ENCODE measurements at regions of chr14 and their contacts with region 1.

Region 1: DNA sequence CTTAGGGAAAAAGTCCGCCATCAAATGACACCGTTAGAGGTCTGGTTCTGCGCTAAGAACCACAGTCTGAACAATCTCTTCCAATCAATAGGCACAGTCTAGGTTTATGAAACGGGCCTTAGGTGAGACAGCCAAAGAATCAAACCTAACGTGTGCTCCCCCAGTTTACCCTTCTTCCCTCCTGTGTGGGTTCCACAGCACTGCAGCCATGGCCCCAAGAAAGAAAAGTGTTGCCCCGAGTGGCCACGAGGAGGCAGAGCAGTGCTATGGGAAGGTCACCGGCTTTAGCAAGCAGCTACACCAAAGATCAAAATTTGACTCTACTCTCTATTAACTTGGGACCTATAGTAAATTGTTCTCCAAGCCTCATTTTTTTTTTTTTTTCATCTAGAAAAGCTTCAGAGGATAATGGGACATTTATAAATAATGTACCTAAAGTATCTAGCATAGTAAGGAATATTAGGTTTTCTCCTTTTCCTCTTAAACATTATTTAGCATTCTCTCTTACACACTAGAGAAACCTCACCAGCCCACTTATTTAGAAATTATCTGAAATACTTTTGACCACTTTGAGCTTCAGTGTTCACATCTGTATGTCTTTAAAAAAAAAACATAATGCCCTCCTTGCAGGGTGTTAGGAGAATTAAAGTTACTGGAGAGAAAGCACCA is 70.2 kb upstream of the GPHB5 start:
- DNase-seq: peak; percentile 53
- H3K4me3 ChIP-seq: no peak overlapping the region
- H3K27ac ChIP-seq: no peak overlapping the region
- H3K4me1 ChIP-seq: no peaks in the 10 kb centered on the region
- H3K27me3 ChIP-seq: no peaks in the 10 kb centered on the region
- CTCF ChIP-seq: peak; percentile 89

Region 2: DNA sequence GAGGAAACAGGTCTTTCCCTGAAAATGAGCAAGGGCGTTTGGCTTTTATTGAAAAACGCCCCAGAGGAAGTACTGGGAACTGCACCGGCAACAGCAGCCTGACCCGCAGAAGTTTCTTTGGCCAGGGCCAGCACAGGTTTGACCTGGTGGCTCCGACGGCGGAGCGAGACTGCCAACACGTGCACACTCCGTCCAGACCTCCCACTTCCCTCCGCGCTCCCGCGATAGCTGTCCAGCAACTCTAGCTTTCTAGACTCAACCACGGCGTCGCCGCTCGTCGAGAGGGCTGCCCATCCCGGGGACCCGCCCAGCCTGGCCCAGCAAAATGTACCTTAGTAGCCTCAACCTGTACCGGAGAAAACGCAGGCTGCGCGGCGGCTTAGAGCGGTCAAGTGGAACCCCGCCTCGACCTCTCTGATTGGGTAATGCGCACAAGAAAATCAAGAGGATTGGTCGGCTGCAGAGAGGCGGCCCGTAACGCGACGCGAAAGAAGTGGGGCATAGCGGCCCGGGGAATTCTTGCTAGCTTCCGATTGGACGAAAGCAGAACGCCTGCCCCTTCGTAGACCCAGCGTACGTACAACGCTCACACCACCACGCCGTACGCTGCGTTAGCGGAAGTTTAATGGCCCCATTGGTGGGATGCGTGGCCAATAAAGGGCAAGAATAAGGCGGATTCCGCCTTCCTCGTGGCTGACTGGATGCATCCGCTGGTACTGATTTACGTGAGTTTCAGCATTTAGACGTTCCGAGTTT is 252.8 kb after region 1 on chr14 and contains the start of gene WDR89:
- intact Hi-C with region 1: loop called (anchors 10 kb)
- DNase-seq: peak; percentile 96
- H3K4me3 ChIP-seq: peak within 1 kb of the TSS; percentile 77
- H3K27ac ChIP-seq: peak within 1 kb of the TSS; percentile 97
- H3K4me1 ChIP-seq: peaks cover 20% of the 10 kb centered on the region
- H3K27me3 ChIP-seq: no peaks in the 10 kb centered on the region
- CTCF ChIP-seq: peak; percentile 79
- total RNA-seq, gene WDR89: 6.3 TPM

Region 3: GRCh38 chr14:63760014-63760413 is 371.1 kb after region 1 on chr14:
- intact Hi-C with region 1: loop called (anchors 10 kb)
- DNase-seq: no peak
- H3K4me3 ChIP-seq: peak overlapping the region; percentile 45
- H3K27ac ChIP-seq: peak overlapping the region; percentile 23
- H3K4me1 ChIP-seq: no peaks in the 10 kb centered on the region
- H3K27me3 ChIP-seq: no peaks in the 10 kb centered on the region
- CTCF ChIP-seq: no peak